ENCODE measurements at regions of chr20 and their contacts with region 1.

Region 1: DNA sequence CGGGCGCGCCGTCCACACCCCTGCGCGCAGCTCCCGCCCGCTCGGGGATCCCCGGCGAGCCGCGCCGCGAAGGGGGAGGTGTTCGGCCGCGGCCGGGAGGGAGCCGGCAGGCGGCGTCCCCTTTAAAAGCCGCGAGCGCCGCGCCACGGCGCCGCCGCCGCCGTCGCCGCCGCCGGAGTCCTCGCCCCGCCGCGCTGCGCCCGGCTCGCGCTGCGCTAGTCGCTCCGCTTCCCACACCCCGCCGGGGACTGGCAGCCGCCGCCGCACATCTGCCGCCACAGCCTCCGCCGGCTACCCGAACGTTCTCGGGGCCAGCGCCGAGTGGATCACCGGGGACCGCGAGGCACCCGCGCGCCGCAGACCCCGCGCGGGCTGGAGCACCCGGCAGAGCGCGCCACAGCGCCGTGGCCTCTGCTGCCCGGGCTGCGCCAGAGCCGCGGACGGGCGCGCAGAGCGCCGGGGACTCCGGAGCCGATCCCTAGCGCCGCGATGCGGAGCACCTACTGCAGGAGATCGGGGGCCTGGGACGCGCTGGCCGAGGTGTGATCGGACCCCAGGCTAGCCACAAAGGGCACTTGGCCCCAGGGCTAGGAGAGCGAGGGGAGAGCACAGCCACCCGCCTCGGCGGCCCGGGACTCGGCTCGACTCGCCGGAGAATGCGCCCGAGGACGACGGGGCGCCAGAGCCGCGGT is at the start of gene BMP2:
- DNase-seq: peak; percentile 41
- H3K4me3 Mint-ChIP-seq: peak within 1 kb of the TSS; percentile 86
- H3K27ac Mint-ChIP-seq: no peak within 1 kb of the TSS
- H3K4me1 Mint-ChIP-seq: peaks cover 20% of the 10 kb centered on the region
- H3K27me3 Mint-ChIP-seq: no peaks in the 10 kb centered on the region
- CTCF ChIP-seq: no peak
- total RNA-seq, gene BMP2: 6.7 and 7.7 TPM in 2 replicates

Region 2: DNA sequence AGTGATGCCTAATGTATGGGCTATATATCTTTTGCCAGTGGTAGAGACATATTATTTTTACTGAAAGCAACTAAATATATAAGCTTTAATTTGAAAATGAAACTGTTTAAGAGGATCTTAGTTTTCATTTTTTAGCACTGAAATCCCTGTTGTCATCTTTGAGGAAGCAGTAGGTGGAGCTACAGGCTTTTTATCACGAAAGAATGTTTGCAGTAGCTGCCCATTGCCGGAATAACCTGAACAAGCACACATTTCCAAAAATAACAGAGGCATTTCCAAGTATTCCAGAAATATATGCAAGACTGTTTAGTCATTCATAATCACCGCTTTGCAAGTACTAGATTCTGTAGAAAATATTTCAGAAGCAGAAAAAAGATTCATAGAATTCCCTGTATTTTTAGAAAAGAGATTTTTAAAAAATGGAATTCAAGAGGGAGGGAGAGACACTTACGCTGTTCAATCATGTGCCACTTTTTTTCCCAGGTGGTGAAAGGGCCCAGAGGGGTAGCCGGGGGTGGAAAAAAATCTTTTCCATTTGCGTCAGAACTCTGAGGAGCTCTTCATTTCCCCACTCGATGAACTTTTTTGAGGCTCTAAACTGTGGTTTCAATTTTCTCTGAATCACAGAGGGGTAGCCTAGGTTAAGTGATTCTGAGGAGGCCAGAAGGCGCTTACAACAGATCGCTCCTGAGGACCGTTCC is 502.3 kb before region 1 on chr20:
- CTCF ChIA-PET with region 1: interaction called, 24 read pairs
- POLR2A ChIA-PET with region 1: interaction called, 3 read pairs
- intact Hi-C with region 1: loop called (anchors 1 kb)
- DNase-seq: peak; percentile 76
- H3K4me3 Mint-ChIP-seq: peak overlapping the region; percentile 30
- H3K27ac Mint-ChIP-seq: peak overlapping the region; percentile 82
- H3K4me1 Mint-ChIP-seq: peaks cover 11% of the 10 kb centered on the region
- H3K27me3 Mint-ChIP-seq: no peaks in the 10 kb centered on the region
- CTCF ChIP-seq: peak; percentile 57

Region 3: DNA sequence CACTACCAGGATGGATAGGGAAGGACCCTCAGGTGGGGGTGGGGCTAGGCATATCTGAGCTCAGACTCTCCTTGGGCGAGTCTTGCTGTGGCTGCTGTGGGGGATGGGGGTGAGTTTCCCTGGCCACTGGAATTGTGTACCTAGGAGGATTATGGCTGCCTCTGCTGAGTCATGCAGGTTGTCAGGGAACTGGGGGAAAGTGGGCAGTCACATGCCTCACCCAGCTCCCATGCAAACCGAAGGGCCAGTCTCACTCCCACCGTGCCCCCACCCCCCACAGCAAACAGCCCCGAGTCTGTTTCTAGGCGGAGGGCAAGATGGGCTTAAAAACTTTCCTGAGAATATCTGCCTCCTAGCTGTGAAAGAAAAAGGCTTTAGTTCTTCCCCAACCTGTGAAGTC is 434.6 kb before region 1 on chr20:
- CTCF ChIA-PET with region 1: no interaction called
- POLR2A ChIA-PET with region 1: no interaction called
- intact Hi-C with region 1: no loop called
- DNase-seq: no peak
- H3K4me3 Mint-ChIP-seq: no peak overlapping the region
- H3K27ac Mint-ChIP-seq: no peak overlapping the region
- H3K4me1 Mint-ChIP-seq: no peaks in the 10 kb centered on the region
- H3K27me3 Mint-ChIP-seq: no peaks in the 10 kb centered on the region
- CTCF ChIP-seq: no peak

Region 4: GRCh38 chr20:6636209-6637159 is 131.2 kb before region 1 on chr20:
- CTCF ChIA-PET with region 1: interaction called, 84 read pairs
- POLR2A ChIA-PET with region 1: interaction called, 21 read pairs
- intact Hi-C with region 1: loop called (anchors 1 kb)
- DNase-seq: peak; percentile 80
- H3K4me3 Mint-ChIP-seq: no peak overlapping the region
- H3K27ac Mint-ChIP-seq: no peak overlapping the region
- H3K4me1 Mint-ChIP-seq: peaks cover 17% of the 10 kb centered on the region
- H3K27me3 Mint-ChIP-seq: no peaks in the 10 kb centered on the region
- CTCF ChIP-seq: peak; percentile 55

Region 5: GRCh38 chr20:6750438-6750837 is 17.2 kb before region 1 on chr20:
- CTCF ChIA-PET with region 1: interaction called, 54 read pairs
- POLR2A ChIA-PET with region 1: interaction called, 5 read pairs
- intact Hi-C with region 1: no loop called
- DNase-seq: no peak
- H3K4me3 Mint-ChIP-seq: no peak overlapping the region
- H3K27ac Mint-ChIP-seq: no peak overlapping the region
- H3K4me1 Mint-ChIP-seq: no peaks in the 10 kb centered on the region
- H3K27me3 Mint-ChIP-seq: no peaks in the 10 kb centered on the region
- CTCF ChIP-seq: no peak

Region 6: DNA sequence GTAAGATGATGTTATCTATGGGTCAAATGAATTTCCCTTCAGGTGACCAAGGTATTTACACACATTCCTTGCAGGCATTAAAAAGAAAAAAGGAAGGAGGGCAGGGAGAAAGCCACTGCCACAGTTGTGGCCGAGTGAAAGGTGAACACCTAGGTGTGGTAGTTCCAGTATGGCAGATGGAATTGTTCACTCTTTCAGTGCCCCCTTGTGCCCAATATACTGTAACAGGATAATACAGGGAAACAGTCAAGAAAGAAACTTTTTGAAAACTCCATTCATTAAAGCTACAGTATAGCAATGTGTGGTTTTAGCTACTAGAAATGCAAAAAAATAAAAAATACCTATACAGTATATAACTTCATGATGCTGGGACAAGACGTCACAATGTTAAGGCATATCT is 51.9 kb after region 1 on chr20:
- CTCF ChIA-PET with region 1: interaction called, 12 read pairs
- POLR2A ChIA-PET with region 1: interaction called, 3 read pairs
- intact Hi-C with region 1: no loop called
- DNase-seq: peak; percentile 42
- H3K4me3 Mint-ChIP-seq: no peak overlapping the region
- H3K27ac Mint-ChIP-seq: no peak overlapping the region
- H3K4me1 Mint-ChIP-seq: peaks cover 4% of the 10 kb centered on the region
- H3K27me3 Mint-ChIP-seq: no peaks in the 10 kb centered on the region
- CTCF ChIP-seq: peak; percentile 34

Region 7: DNA sequence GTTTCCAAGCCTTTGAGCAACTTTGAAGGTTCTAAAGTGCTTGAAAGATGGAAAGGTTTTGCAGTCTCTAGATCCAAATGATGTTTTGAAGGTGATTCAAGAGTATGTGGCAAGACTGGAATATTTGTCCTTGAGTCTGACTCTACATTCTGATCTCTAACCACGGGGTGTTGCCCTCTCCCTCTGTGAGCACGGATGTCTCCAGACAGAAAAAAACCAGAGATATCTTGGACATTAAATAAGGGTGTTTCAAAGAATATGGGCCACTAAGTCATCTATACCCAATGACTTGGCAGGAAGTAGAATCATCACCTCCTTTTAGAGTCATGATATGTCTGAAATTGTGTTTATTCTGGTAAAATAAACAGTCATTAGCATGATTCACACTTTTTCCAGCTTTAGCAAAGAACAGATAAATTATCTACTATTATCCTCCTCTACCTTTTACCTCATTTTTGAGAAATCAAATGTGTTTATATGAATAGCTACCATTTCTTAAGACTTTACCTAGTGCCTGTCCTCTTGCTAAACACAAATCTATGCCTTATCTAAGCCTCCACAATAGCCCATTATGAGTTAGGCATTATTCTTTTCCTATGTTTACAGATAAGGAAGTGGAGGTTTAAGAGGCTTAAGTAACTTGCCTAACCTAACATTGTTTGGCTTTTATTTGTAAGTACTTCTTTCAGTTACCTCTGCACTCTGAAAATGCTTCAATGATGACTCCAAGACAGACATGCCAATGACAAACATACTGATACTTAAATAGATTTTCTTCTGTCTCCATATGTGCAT is 384.2 kb after region 1 on chr20:
- CTCF ChIA-PET with region 1: no interaction called
- POLR2A ChIA-PET with region 1: no interaction called
- intact Hi-C with region 1: no loop called
- DNase-seq: peak; percentile 44
- H3K4me3 Mint-ChIP-seq: no peak overlapping the region
- H3K27ac Mint-ChIP-seq: peak overlapping the region; percentile 31
- H3K4me1 Mint-ChIP-seq: peaks cover 15% of the 10 kb centered on the region
- H3K27me3 Mint-ChIP-seq: no peaks in the 10 kb centered on the region
- CTCF ChIP-seq: no peak

Region 8: DNA sequence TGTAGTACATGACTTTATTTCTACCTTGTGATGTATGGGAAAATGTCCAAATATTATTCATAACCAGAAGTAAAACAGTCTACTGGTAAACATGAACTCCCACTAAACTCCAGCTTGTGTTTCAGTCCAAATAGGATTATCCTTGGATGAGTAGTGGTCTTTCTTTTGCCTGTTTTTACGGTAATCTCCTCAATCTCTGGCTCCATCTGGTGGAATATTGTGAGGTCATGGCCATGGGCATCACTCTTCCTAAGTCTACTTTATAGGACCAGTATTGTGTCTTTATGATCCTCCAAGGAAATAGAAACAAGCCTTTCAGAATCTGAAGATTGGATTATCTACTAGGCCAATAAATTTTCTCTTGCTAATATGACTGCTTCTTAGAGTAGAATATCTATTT is 504.8 kb after region 1 on chr20:
- CTCF ChIA-PET with region 1: interaction called, 7 read pairs
- POLR2A ChIA-PET with region 1: interaction called, 3 read pairs
- intact Hi-C with region 1: loop called (anchors 2 kb)
- DNase-seq: peak; percentile 18
- H3K4me3 Mint-ChIP-seq: no peak overlapping the region
- H3K27ac Mint-ChIP-seq: no peak overlapping the region
- H3K4me1 Mint-ChIP-seq: no peaks in the 10 kb centered on the region
- H3K27me3 Mint-ChIP-seq: no peaks in the 10 kb centered on the region
- CTCF ChIP-seq: peak; percentile 35

Region 9: GRCh38 chr20:7926767-7927166 is 1159.1 kb after region 1 on chr20:
- CTCF ChIA-PET with region 1: interaction called, 7 read pairs
- POLR2A ChIA-PET with region 1: interaction called, 3 read pairs
- intact Hi-C with region 1: loop called (anchors 2 kb)
- DNase-seq: peak; percentile 50
- H3K4me3 Mint-ChIP-seq: no peak overlapping the region
- H3K27ac Mint-ChIP-seq: no peak overlapping the region
- H3K4me1 Mint-ChIP-seq: peaks cover 9% of the 10 kb centered on the region
- H3K27me3 Mint-ChIP-seq: no peaks in the 10 kb centered on the region
- CTCF ChIP-seq: peak; percentile 59